ENCODE measurements at regions of chr3 and their contacts with region 1.

Region 1: DNA sequence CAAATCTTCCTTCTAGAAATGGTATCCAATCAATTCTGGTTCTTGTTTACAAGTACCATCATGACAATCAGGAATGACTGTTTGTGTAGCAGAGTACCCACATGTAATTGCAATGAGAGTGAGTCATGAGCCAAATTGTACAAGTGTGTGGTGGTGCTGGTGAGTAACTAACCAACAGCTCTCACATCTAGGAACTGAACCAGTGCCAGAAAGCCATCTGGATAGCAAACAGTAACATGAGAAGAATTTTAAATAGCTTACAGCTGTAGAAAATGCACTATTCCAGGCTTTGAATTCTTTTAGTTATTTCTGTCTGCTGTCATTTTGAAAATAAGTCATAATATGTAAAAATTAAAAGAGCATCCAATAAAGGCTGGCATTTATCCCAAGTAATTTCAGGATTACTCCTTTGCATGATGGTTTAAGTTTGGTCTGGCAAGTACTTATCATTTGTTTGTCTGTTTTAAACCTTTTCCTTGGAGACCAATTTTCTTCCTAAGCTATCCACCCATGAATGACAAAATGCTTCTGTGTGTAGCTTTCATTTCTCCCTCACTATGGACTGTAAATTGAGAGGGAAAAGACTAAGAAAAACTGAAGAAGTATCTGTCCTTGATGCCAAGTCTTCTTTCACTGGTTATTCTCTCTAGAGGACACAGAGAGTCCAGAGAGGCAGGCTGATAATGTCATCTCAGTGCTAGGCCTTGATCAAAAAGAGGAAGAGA is 60.0 kb downstream of the PIK3CB start:
- DNase-seq: peak; percentile 75 to 89
- ATAC-seq: peak; percentile 99
- H3K4me3 ChIP-seq: no peak overlapping the region
- H3K27ac ChIP-seq: peak overlapping the region; percentile 77 to 86 (median 78)
- H3K4me1 ChIP-seq: peaks cover 26 to 43% of the 10 kb centered on the region in 2 donors
- H3K27me3 ChIP-seq: no peaks in the 10 kb centered on the region
- CTCF ChIP-seq: no peak
- POLR2A ChIP-seq: no peak

Region 2: DNA sequence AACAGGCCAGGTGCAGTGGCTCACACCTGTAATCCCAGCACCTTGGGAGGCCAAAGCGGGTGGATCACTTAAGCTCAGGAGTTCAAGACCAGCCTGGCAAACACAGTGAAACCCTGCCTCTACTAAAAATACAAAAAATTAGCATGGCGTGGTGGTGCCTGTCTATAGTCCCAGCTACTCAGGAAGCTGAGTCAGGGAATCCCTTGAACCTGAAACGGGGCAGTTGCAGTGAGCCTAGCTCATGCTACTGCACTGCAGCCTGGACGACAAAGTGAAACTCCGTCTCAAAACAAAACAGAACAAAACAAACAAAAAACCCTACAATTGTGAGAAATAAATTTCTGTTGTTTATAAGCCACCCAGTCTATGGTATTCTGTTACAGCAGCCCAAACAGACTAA is 34.6 kb before region 1 on chr3:
- in situ Hi-C with region 1: no loop called
- intact Hi-C with region 1: no loop called
- DNase-seq: no peak
- ATAC-seq: no peak
- H3K4me3 ChIP-seq: no peak overlapping the region
- H3K27ac ChIP-seq: no peak overlapping the region
- H3K4me1 ChIP-seq: no peaks in the 10 kb centered on the region
- H3K27me3 ChIP-seq: no peaks in the 10 kb centered on the region
- CTCF ChIP-seq: no peak
- POLR2A ChIP-seq: no peak

Region 3: DNA sequence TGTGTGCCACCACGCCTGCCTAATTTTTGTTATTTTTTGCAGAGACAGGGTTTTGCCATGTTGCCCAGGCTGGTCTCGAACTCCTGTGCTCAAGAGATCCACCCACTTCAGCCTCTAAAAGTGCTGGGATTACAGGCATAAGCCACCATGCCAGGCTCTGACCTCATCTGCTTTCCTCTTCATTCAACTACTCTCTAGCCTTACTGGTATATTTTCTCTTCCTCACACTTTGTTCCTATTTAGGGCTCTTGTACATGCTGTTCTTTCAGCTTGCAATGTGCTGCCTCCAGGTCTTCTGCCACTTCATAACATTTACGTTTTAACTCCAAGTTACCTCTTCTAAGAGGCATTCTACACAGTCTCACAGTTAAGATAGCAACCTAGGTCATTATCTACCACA is 25.1 kb after region 1 on chr3:
- in situ Hi-C with region 1: no loop called
- intact Hi-C with region 1: loop called (anchors 2 kb)
- DNase-seq: peak; percentile 35 to 66
- ATAC-seq: peak; percentile 90 to 93
- H3K4me3 ChIP-seq: no peak overlapping the region
- H3K27ac ChIP-seq: peak overlapping the region; percentile 73 to 85 (median 78)
- H3K4me1 ChIP-seq: peaks cover 40 to 46% of the 10 kb centered on the region in 2 donors
- H3K27me3 ChIP-seq: no peaks in the 10 kb centered on the region
- CTCF ChIP-seq: no peak
- POLR2A ChIP-seq: peak; percentile 5 to 36

Region 4: DNA sequence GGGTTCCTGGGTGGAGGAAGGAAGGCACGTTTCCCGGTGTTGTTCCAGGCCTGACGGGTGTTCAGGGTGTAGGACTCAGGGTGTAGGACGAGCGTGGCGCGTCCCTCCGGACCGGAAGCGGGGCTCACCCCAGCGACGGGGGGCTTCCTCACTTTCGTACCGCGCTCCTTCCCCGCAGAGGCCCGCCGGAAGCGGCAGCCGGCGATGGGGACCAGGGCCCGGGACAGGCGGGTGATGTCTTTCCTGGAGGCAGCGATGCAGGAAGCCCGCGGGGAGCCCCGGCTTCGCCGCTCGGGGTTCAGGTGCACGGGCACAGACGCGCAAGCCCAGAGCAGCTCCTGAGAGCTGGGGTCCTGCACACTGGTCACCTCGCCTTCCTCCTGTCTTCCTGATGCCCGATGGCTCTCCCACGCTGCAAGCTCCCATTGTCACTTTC is 185.7 kb after region 1 on chr3:
- in situ Hi-C with region 1: no loop called
- intact Hi-C with region 1: no loop called
- DNase-seq: no peak
- ATAC-seq: no peak
- H3K4me3 ChIP-seq: no peak overlapping the region
- H3K27ac ChIP-seq: no peak overlapping the region
- H3K4me1 ChIP-seq: no peaks in the 10 kb centered on the region
- H3K27me3 ChIP-seq: peaks cover 24 to 55% (median 29%) of the 10 kb centered on the region in 3 donors
- CTCF ChIP-seq: no peak
- POLR2A ChIP-seq: no peak